Endothelial cell of umbilical vein (primary cell): ENCODE measurements at regions of chr2 and their contacts with region 1.

Region 1: GRCh38 chr2:42328148-42328833 is 32.7 kb downstream of the COX7A2L start:
- DNase-seq: peak; percentile 54
- H3K4me3 ChIP-seq: no peak overlapping the region
- H3K27ac ChIP-seq: no peak overlapping the region
- H3K4me1 ChIP-seq: no peaks in the 10 kb centered on the region
- H3K27me3 ChIP-seq: no peaks in the 10 kb centered on the region
- CTCF ChIP-seq: peak; percentile 32 to 36
- POLR2A ChIP-seq: no peak

Region 2: GRCh38 chr2:41853427-41854216 is 474.7 kb before region 1 on chr2:
- CTCF ChIA-PET with region 1: interaction called, 13 read pairs
- POLR2A ChIA-PET with region 1: no interaction called
- dilution Hi-C with region 1: no loop called
- intact Hi-C with region 1: loop called (anchors 5 kb)
- DNase-seq: peak; percentile 53
- H3K4me3 ChIP-seq: no peak overlapping the region
- H3K27ac ChIP-seq: no peak overlapping the region
- H3K4me1 ChIP-seq: no peaks in the 10 kb centered on the region
- H3K27me3 ChIP-seq: peaks cover 4% of the 10 kb centered on the region in 2 experiments
- CTCF ChIP-seq: peak; percentile 53 to 66
- POLR2A ChIP-seq: no peak

Region 3: DNA sequence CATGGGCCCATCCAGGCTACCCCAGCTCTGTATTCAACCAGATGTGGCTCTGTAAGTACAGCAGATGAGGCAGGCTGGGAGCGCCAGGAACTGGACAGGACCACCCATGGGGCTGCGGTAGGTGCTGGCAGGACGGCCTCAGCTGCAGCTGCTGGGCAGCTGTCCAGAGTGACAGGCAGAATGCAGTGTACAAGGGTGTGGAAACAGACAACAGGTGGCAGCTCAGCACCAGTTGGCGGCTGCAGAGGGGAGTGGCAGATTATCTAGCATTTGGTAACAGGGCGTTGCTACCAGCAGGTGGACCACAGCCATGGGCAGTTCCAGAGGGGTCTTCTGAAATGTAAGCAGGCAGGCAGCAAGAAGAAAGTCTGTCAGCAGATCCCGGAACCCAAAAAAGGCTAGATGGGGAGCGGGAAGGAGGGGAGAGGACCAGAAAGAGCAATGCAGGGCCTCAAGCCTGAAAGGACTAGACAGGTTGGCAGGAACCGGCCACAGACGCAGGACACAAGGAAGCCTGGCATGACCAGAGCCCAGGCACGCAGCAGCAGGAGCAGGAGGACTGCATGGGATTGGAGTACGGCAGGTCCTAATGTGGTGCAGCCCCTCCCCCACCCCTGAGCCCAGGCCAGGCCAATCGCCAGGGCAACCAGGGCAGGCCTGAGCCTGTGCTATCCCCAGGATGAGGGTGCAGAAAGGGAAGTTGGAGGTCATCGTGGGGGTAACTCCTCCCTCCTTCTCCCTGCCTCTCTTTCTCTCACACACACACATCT is 255.8 kb before region 1 on chr2:
- CTCF ChIA-PET with region 1: no interaction called
- POLR2A ChIA-PET with region 1: no interaction called
- dilution Hi-C with region 1: no loop called
- intact Hi-C with region 1: no loop called
- DNase-seq: no peak
- H3K4me3 ChIP-seq: no peak overlapping the region
- H3K27ac ChIP-seq: no peak overlapping the region
- H3K4me1 ChIP-seq: no peaks in the 10 kb centered on the region
- H3K27me3 ChIP-seq: peaks cover 0 to 1% of the 10 kb centered on the region in 2 experiments
- CTCF ChIP-seq: no peak
- POLR2A ChIP-seq: no peak

Region 4: DNA sequence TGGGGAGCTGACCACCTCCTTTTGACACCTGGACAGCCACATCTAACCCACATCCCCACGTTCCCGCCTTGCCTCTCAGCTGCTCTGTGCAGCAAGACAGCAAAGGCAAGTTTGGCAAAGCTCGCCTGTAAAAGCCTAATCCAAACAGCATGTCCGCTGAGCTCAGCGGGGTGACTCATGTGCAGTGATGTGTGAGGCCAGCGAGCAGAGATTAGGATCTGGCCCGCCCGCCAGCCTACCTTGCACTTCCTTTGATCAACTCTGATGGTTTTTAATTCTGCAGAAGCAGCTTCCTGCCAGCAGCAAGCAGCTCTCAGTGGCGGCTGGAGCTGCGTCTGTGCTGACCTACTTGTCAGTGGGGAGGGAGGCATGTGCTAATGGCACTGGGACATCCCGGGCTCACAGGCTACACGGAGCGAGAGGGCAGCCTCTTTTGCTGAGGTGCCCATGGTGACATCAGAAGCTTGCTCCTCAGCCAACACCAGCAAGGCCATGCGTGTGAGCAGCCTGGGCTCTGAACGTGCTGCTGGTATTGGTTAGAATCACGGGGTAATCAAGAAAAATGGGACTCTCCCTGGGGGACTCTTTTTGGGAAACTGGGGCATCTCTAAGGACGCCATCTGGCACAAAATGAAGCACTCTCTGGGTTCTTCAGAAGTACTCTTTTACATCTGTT is 195.2 kb before region 1 on chr2:
- CTCF ChIA-PET with region 1: interaction called, 23 read pairs
- POLR2A ChIA-PET with region 1: no interaction called
- dilution Hi-C with region 1: no loop called
- intact Hi-C with region 1: no loop called
- DNase-seq: peak; percentile 89
- H3K4me3 ChIP-seq: no peak overlapping the region
- H3K27ac ChIP-seq: no peak overlapping the region
- H3K4me1 ChIP-seq: peaks cover 34% of the 10 kb centered on the region
- H3K27me3 ChIP-seq: peaks cover 0 to 3% of the 10 kb centered on the region in 2 experiments
- CTCF ChIP-seq: no peak
- POLR2A ChIP-seq: no peak

Region 5: DNA sequence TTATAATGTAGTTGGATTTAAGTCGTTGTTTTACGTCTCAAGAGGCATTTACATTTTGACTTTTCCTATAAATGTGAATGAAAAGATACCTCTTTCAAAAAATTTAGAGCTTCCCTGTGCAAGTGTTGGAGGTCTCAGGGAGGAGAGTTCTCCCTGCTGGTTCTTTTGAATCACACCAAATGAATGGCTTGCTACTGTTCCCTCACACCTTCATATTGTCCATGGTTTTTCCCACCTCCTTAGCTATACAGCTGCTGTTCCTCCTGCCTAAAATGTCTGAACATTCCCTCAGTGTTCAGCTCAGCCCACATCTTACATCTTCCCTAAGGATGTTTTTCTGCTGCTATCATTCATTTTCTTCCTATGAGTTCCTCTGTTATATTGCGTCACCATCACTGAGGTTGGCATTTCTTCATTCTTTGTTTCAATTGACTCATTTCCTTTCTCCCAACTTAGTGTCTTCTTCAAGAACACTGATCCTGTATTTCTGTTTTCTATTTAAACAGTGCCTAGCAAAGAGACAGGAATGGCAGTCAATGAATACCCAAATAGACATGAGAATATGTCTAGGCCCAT is 13.3 kb before region 1 on chr2:
- CTCF ChIA-PET with region 1: interaction called, 21 read pairs
- POLR2A ChIA-PET with region 1: no interaction called
- dilution Hi-C with region 1: no loop called
- intact Hi-C with region 1: no loop called
- DNase-seq: peak; percentile 69
- H3K4me3 ChIP-seq: no peak overlapping the region
- H3K27ac ChIP-seq: no peak overlapping the region
- H3K4me1 ChIP-seq: peaks cover 11% of the 10 kb centered on the region
- H3K27me3 ChIP-seq: no peaks in the 10 kb centered on the region
- CTCF ChIP-seq: no peak
- POLR2A ChIP-seq: no peak

Region 6: GRCh38 chr2:42360890-42361727 is 32.8 kb after region 1 on chr2 and contains the start of gene COX7A2L:
- CTCF ChIA-PET with region 1: interaction called, 9 read pairs
- POLR2A ChIA-PET with region 1: no interaction called
- dilution Hi-C with region 1: no loop called
- intact Hi-C with region 1: loop called (anchors 2 kb)
- DNase-seq: peak; percentile 97
- H3K4me3 ChIP-seq: peak within 1 kb of the TSS; percentile 61 to 92 (median 77)
- H3K27ac ChIP-seq: peak within 1 kb of the TSS; percentile 97
- H3K4me1 ChIP-seq: peaks cover 18% of the 10 kb centered on the region
- H3K27me3 ChIP-seq: peaks cover 1 to 2% of the 10 kb centered on the region in 2 experiments
- CTCF ChIP-seq: peak in 1 of 2 donors; percentile 33
- POLR2A ChIP-seq: peak; percentile 73
- total RNA-seq, gene COX7A2L: 94.2 and 101 TPM in 2 replicates